Tibial artery (tissue), 4 donors: ENCODE measurements at regions of chr6 and their contacts with region 1.

Region 1: GRCh38 chr6:109284675-109285074 is 97.6 kb downstream of the CD164 start:
- DNase-seq: no peak
- H3K4me3 ChIP-seq: no peak overlapping the region
- H3K27ac ChIP-seq: no peak overlapping the region
- H3K4me1 ChIP-seq: no peaks in the 10 kb centered on the region
- H3K27me3 ChIP-seq: no peaks in the 10 kb centered on the region
- CTCF ChIP-seq: no peak

Region 2: GRCh38 chr6:109229536-109229935 is 55.1 kb before region 1 on chr6:
- intact Hi-C with region 1: loop called (anchors 10 kb)
- DNase-seq: no peak
- H3K4me3 ChIP-seq: no peak overlapping the region
- H3K27ac ChIP-seq: peak overlapping the region; percentile 46 to 70
- H3K4me1 ChIP-seq: peaks cover 0 to 17% (median 10%) of the 10 kb centered on the region in 4 donors
- H3K27me3 ChIP-seq: no peaks in the 10 kb centered on the region
- CTCF ChIP-seq: no peak